ENCODE measurements at regions of chr1 and their contacts with region 1.

Region 1: GRCh38 chr1:203069030-203069747 is 16.6 kb downstream of the MYOG start:
- DNase-seq: no peak
- ATAC-seq: peak; percentile 88

Region 2: GRCh38 chr1:202982715-202983430 is 86.3 kb before region 1 on chr1:
- intact Hi-C with region 1: no loop called
- DNase-seq: no peak
- ATAC-seq: no peak

Region 3: DNA sequence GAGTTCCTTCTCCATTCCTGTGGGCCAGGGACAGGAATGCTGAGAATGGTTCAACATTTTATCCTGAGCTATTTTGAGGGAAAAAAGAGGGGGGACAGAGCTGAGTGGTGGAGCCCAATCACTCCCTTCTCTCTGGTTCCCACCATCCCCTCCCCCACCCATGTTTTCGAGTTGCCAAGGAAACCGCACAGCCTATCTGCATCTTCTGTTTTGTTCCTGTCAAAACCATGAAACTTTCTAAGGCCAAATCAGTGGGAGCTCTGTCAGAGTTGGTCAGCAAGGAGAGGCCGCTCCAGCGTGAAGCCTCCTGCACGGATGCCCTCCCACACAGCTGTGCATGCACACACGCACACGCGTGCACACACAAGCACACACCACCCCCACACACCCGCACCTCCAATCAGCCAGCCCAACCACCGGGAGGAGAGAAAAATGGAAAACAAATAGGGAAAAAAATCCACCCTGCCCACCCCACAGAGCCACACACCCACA is 503.0 kb after region 1 on chr1:
- intact Hi-C with region 1: loop called (anchors 10 kb)
- DNase-seq: no peak
- ATAC-seq: no peak

Measured in Right ventricle myocardium inferior (tissue), 1 donor.